Left colon (tissue), 2 donors: ENCODE measurements at regions of chr10 and their contacts with region 1.

Region 1: GRCh38 chr10:130857631-130858295 is 453.8 kb downstream of the TCERG1L start:
- DNase-seq: no peak
- ATAC-seq: no peak

Region 2: DNA sequence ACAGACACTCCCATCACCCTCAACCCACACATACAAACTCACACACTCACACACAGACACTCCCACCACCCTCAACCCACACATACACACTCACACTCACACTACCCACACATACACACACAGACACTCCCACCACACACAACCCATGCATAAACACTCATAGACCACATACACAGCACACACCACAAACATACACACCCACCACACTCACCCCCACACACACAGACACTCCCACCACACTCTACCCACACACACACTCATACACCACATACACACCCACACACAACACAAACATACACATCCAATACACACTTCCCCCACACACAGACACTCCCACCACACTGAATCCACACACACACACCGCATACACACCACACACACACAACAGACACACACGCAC is 67.4 kb before region 1 on chr10:
- intact Hi-C with region 1: no loop called
- DNase-seq: no peak
- ATAC-seq: no peak

Region 3: DNA sequence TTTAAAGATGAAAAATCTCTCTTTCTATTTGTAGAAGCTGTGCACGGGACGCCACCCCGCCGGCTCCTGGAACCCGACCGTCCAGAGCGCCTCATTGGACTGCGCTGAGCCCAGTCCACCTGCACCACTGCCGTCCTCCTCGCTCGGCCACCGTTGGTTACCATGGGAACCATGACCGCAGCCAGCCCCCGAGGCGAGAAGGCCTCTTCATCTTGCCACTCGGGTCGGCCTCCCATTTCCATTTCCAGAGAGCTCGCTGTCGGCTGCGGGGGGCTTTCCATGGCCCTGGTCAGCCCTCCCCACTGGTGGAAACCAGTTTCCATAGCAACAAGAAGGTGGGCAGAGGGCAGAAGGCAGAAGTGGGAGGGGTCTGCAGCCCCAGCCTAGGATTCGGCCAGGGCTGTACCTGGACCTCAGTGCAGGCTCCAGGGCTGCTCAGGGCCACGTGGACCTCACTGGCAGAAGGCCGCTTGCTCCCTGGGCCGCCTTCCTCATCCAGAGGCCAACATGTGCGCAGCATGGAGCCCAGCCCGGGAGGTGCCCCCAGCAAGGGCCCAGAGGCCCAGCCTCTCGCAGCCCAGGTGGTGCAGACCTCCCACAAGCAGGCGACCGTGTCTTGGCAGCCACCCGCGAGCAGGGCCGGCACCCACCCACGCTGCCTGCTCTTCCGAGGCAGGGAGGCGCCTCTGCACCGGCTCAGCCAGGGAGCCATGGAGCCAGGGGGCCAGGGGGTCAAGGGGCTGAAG is 759.5 kb after region 1 on chr10:
- intact Hi-C with region 1: loop called in 1 of 2 experiments (anchors 10 kb)
- DNase-seq: no peak
- ATAC-seq: no peak